Endothelial cell of umbilical vein (primary cell): ENCODE measurements at regions of chr10 and their contacts with region 1.

Region 1: DNA sequence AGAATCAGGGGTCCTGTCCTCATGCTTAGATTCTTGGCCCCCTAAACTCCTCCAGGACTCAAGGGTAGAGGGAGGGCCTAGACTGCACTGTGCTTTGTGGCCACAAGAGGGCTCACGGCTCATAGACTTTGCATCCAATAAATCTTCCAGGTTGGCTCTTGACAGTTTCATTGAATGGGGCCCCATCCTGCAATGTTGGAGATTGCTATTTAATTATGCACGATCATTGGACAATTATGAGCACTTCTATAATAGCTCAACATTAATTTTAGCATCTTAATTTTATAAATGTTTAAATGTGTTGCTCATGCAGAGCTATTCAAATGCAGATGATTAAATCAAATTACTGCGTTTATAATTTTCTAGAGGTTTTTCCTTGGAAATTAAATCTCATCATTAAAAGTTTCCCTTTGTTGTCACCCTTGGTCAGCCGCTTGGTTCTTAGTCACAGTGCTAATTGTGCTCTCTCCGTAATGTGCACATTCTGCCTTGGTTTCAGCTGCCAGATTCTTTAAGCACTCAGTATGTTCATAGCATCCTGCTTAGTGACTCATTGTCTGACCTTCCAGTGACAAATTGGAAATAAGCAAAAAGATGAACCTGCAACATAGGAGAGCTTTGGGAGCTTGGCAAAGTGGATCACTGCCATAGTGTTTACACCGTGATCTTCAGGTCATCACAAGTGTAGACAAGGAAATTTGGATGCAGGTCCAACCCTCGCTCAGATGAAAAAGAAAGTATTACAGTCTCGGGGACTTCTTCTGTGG is 33.4 kb upstream of the PLPP4 start:
- DNase-seq: peak; percentile 86
- H3K4me3 ChIP-seq: no peak overlapping the region
- H3K27ac ChIP-seq: peak overlapping the region; percentile 86
- H3K4me1 ChIP-seq: peaks cover 50% of the 10 kb centered on the region
- H3K27me3 ChIP-seq: no peaks in the 10 kb centered on the region
- CTCF ChIP-seq: peak; percentile 91 to 97
- POLR2A ChIP-seq: no peak

Region 2: DNA sequence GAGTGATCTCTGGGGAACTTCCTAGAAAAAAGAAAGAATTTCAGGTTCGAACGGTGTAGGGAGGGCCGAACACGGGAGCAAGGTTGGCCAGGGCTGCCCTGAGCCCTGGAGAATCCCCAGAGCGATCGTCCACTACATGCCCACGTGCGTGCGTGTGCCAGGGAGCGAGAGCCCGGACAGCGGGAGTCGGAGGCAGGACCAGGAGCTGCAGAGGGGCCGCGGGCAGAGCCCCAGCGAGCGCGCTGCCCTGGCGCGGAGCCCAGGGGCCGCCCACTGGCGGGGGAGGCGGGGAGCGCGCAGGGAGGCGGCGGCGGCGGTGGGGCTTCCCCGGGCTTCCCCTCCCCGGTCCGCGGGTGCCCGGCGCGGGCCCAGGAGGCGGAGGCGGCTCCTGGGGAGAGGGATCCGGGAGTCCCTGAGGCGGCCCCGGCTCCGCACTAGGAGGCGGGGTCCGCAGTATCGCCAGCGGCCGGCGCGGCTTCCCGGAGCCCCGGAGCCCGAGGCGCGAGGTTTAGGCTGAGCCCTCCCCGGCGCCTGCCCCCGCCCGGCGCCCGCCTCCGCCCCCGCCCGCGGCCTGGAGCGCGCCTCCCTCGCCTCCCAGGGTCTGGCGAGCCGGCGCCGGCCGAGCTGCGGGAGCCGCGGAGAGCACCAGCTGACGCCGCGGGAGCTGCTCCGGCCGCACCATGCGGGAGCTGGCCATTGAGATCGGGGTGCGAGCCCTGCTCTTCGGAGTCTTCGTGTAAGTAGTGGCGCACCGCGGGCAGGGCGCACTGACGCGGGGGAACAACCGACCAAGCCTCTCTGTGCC is 33.2 kb after region 1 on chr10 and contains the start of gene PLPP4:
- CTCF ChIA-PET with region 1: interaction called, 23 read pairs
- POLR2A ChIA-PET with region 1: no interaction called
- dilution Hi-C with region 1: no loop called
- intact Hi-C with region 1: loop called (anchors 1 kb)
- DNase-seq: peak; percentile 72
- H3K4me3 ChIP-seq: peak within 1 kb of the TSS; percentile 33 to 58 (median 50)
- H3K27ac ChIP-seq: peak within 1 kb of the TSS; percentile 67
- H3K4me1 ChIP-seq: peaks cover 45% of the 10 kb centered on the region
- H3K27me3 ChIP-seq: peaks cover 0 to 3% of the 10 kb centered on the region in 2 experiments
- CTCF ChIP-seq: no peak
- POLR2A ChIP-seq: peak; percentile 49
- total RNA-seq, gene PLPP4: 15.5 and 17.1 TPM in 2 replicates

Region 3: GRCh38 chr10:120600871-120601649 is 177.4 kb after region 1 on chr10:
- CTCF ChIA-PET with region 1: interaction called, 14 read pairs
- POLR2A ChIA-PET with region 1: no interaction called
- dilution Hi-C with region 1: no loop called
- intact Hi-C with region 1: loop called (anchors 1 kb)
- DNase-seq: peak; percentile 47
- H3K4me3 ChIP-seq: no peak overlapping the region
- H3K27ac ChIP-seq: no peak overlapping the region
- H3K4me1 ChIP-seq: peaks cover 5% of the 10 kb centered on the region
- H3K27me3 ChIP-seq: no peaks in the 10 kb centered on the region
- CTCF ChIP-seq: peak; percentile 51 to 71
- POLR2A ChIP-seq: no peak

Region 4: GRCh38 chr10:120650705-120651399 is 227.2 kb after region 1 on chr10:
- CTCF ChIA-PET with region 1: interaction called, 8 read pairs
- POLR2A ChIA-PET with region 1: no interaction called
- dilution Hi-C with region 1: no loop called
- intact Hi-C with region 1: loop called (anchors 1 kb)
- DNase-seq: peak; percentile 73
- H3K4me3 ChIP-seq: no peak overlapping the region
- H3K27ac ChIP-seq: peak overlapping the region; percentile 32
- H3K4me1 ChIP-seq: peaks cover 9% of the 10 kb centered on the region
- H3K27me3 ChIP-seq: no peaks in the 10 kb centered on the region
- CTCF ChIP-seq: no peak
- POLR2A ChIP-seq: no peak

Region 5: DNA sequence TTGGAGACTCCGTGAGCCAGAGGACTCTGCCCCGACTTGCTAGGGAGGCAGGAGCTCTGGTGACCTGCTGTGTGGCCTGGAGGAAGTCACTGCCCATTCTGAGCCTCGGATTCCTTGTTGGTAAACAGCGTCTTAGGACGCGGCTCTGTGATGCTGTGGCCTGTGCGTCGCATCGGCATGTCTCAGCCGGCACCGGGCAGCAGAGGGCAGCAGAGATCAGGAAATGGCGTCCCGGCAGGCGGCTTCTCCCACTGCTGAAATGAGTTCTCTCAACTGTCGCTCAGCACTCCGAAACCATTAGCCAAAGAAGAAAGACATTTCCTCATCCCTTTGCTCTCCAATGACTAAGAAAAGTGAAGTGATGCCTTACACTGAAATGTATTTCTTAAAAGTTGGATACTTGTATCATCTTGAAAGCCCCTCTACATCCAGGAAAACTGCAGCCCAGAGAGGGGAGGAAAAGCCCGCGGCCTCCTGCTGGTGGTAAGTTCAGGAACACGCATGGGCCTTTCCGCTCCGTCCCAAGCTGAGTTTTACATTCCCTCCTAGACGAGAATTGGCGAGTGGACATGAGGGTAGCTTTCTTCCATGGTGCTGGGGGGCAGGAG is 519.3 kb after region 1 on chr10:
- CTCF ChIA-PET with region 1: no interaction called
- POLR2A ChIA-PET with region 1: no interaction called
- dilution Hi-C with region 1: no loop called
- intact Hi-C with region 1: loop called (anchors 2 kb)
- DNase-seq: peak; percentile 81
- H3K4me3 ChIP-seq: no peak overlapping the region
- H3K27ac ChIP-seq: no peak overlapping the region
- H3K4me1 ChIP-seq: no peaks in the 10 kb centered on the region
- H3K27me3 ChIP-seq: no peaks in the 10 kb centered on the region
- CTCF ChIP-seq: peak; percentile 83 to 85
- POLR2A ChIP-seq: no peak